SK-N-SH (cell line): ENCODE measurements at regions of chr21 and their contacts with region 1.

Region 1: DNA sequence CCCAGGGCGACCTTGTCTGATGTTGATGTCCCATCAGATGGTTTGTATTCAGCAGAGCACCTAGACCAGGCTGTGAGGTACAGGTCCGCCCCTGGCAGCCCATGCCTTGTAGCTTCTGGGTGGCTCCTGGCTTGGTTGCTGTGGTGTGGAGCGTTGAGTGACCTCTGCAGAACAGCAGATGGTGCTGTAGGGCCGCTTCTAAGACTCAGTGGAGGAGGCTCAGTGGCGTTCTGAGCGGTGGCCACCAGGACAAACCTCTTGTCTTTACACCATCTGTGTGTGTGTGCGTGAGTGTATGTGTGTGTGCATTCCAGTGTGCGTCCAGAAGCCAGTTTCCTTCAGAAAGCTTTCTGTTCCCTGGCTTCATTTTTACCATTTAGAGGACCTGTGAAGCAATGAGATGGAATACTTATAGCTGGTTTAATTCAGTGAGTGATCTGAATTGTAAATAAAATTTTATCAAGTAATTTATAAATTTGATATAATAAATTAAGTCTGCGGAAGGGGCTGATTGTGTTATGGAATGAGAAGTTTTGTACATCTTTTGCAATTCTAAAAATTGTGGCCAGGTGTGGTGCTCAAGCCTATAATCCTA is 66.1 kb downstream of the ADARB1 start:
- DNase-seq: peak; percentile 90
- H3K4me3 ChIP-seq: no peak overlapping the region; a peak in 1 of 4 replicates
- H3K27ac ChIP-seq: no peak overlapping the region
- H3K4me1 ChIP-seq: peaks cover 6 to 9% of the 10 kb centered on the region in 2 experiments; a peak in 3 of 4 replicates
- H3K27me3 ChIP-seq: no peaks in the 10 kb centered on the region
- CTCF ChIP-seq: peak; percentile 91
- EP300 ChIP-seq: no peak
- RAD21 ChIP-seq: peak; percentile 99

Region 2: DNA sequence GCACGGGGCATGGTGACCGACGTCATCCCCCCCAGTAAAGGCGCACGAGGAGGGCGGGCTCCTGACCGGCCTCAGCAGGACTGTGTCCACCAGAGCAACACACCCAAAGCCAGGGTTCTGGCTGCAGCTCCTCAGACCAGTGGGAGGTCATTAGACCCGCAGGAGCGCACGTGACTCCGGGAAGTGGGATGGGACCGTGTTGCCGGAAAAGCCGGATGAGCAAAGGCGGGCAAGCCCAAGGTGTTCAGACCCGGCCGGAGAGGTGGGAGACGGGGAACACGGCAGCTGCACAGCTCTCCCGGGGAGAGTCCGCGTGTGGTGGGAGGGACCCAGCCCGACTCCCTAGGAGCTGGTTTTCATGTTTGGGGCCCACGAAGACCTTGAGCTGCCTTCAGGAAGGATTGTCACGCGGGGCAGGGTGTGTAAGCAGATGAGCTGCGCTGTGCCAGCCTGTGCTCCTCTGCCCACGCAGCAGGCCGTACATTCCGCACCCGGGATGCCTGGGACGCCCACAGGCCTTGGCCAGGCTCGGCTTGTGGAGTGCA is 1148.9 kb before region 1 on chr21:
- CTCF ChIA-PET with region 1: no interaction called
- POLR2A ChIA-PET with region 1: no interaction called
- DNase-seq: no peak
- H3K4me3 ChIP-seq: no peak overlapping the region
- H3K27ac ChIP-seq: no peak overlapping the region
- H3K4me1 ChIP-seq: no peaks in the 10 kb centered on the region
- H3K27me3 ChIP-seq: no peaks in the 10 kb centered on the region
- CTCF ChIP-seq: no peak
- EP300 ChIP-seq: no peak
- RAD21 ChIP-seq: no peak

Region 3: GRCh38 chr21:44723177-44724131 is 417.0 kb before region 1 on chr21:
- CTCF ChIA-PET with region 1: no interaction called
- POLR2A ChIA-PET with region 1: no interaction called
- DNase-seq: no peak
- H3K4me3 ChIP-seq: no peak overlapping the region
- H3K27ac ChIP-seq: no peak overlapping the region
- H3K4me1 ChIP-seq: no peaks in the 10 kb centered on the region
- H3K27me3 ChIP-seq: peaks cover 59% of the 10 kb centered on the region; the same call in 1 of the 2 replicates
- CTCF ChIP-seq: no peak
- EP300 ChIP-seq: no peak
- RAD21 ChIP-seq: no peak

Region 4: GRCh38 chr21:44773287-44773966 is 367.0 kb before region 1 on chr21:
- CTCF ChIA-PET with region 1: no interaction called
- POLR2A ChIA-PET with region 1: no interaction called
- DNase-seq: peak; percentile 49
- H3K4me3 ChIP-seq: no peak overlapping the region
- H3K27ac ChIP-seq: no peak overlapping the region; a peak in 1 of 4 replicates
- H3K4me1 ChIP-seq: peaks cover 0 to 4% of the 10 kb centered on the region in 2 experiments; a peak in 1 of 4 replicates
- H3K27me3 ChIP-seq: no peaks in the 10 kb centered on the region
- CTCF ChIP-seq: no peak
- EP300 ChIP-seq: no peak
- RAD21 ChIP-seq: no peak

Region 5: GRCh38 chr21:44949779-44950198 is 190.7 kb before region 1 on chr21:
- CTCF ChIA-PET with region 1: interaction called, 357 read pairs
- POLR2A ChIA-PET with region 1: no interaction called
- DNase-seq: peak; percentile 95
- H3K4me3 ChIP-seq: peak overlapping the region in 1 of 2 experiments; percentile 33; a peak in 1 of 4 replicates
- H3K27ac ChIP-seq: no peak overlapping the region
- H3K4me1 ChIP-seq: peaks cover 0 to 2% of the 10 kb centered on the region in 2 experiments; a peak in 1 of 4 replicates
- H3K27me3 ChIP-seq: no peaks in the 10 kb centered on the region
- CTCF ChIP-seq: peak; percentile 93
- EP300 ChIP-seq: no peak
- RAD21 ChIP-seq: peak; percentile 91

Region 6: DNA sequence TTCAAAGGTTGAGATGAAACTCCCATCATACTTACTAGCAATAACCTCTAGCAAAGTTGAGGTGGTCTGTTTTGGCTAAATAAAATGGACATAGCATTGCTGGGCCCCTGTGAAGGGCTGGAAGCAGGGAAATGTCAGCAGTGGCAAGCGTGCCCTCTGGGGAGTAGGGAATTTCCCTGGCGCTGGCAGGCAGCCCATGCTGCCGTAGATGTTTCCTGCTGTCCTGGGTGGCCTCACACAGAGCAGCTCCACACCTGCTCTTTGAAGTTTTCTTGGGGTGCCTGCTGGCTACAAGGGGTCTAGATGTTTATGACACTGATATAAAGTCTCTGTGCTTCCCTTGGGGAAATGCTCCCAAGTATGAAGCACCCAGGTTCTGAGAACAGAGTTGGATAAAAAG is 35.9 kb before region 1 on chr21:
- CTCF ChIA-PET with region 1: interaction called, 41 read pairs
- POLR2A ChIA-PET with region 1: no interaction called
- DNase-seq: peak; percentile 52
- H3K4me3 ChIP-seq: no peak overlapping the region
- H3K27ac ChIP-seq: no peak overlapping the region
- H3K4me1 ChIP-seq: peaks cover 18 to 31% of the 10 kb centered on the region in 2 experiments; a peak in 2 of 4 replicates
- H3K27me3 ChIP-seq: no peaks in the 10 kb centered on the region
- CTCF ChIP-seq: no peak
- EP300 ChIP-seq: no peak
- RAD21 ChIP-seq: no peak

Region 7: DNA sequence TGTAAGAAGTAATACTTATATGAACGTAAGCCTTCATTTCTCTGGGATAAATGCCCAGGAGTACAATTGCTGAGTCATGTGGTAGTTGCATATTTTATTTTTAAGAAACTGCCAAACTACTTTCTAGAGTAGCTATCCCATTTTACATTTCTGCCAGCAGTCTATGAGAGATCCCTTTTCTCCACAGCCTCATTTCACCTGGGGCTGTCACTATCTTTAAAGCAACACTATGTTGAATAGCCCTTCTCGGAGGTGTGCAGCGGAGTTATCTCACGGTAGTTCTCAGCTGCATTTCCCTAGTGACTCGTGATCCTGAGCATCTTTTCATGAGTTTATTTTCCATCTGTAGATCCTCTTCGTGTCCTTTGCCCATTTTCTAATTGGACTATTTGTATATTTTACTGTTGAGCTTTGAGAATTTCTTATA is 27.4 kb after region 1 on chr21:
- CTCF ChIA-PET with region 1: interaction called, 28 read pairs
- POLR2A ChIA-PET with region 1: no interaction called
- DNase-seq: no peak
- H3K4me3 ChIP-seq: no peak overlapping the region
- H3K27ac ChIP-seq: peak overlapping the region in 1 of 2 experiments; percentile 38; a peak in 3 of 4 replicates
- H3K4me1 ChIP-seq: peaks cover 4 to 14% of the 10 kb centered on the region in 2 experiments; a peak in 2 of 4 replicates
- H3K27me3 ChIP-seq: no peaks in the 10 kb centered on the region
- CTCF ChIP-seq: no peak
- EP300 ChIP-seq: no peak
- RAD21 ChIP-seq: no peak

Region 8: DNA sequence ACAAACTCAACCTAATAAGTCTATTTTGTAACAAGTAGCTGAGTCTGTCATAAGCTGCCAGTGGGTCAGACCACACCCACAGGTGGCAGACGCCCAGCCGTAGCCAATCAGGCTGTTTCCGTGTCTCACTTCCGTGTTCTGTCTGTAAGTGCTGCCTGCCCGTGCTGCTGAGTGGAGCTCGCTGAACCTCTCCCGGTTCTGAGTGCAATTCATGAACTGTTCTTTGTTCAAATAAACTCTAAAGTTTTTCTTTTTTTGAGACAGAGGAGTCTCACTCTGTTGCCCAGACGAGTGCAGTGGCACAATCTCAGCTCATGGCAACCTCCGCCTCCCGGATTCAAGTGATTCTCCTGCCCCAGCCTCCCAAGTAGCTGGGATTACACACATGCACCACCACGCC is 122.2 kb after region 1 on chr21:
- CTCF ChIA-PET with region 1: interaction called, 19 read pairs
- POLR2A ChIA-PET with region 1: no interaction called
- DNase-seq: peak; percentile 10
- H3K4me3 ChIP-seq: no peak overlapping the region
- H3K27ac ChIP-seq: no peak overlapping the region
- H3K4me1 ChIP-seq: peaks cover 0 to 18% of the 10 kb centered on the region in 2 experiments; a peak in 1 of 4 replicates
- H3K27me3 ChIP-seq: no peaks in the 10 kb centered on the region
- CTCF ChIP-seq: no peak
- EP300 ChIP-seq: no peak
- RAD21 ChIP-seq: no peak

Region 9: DNA sequence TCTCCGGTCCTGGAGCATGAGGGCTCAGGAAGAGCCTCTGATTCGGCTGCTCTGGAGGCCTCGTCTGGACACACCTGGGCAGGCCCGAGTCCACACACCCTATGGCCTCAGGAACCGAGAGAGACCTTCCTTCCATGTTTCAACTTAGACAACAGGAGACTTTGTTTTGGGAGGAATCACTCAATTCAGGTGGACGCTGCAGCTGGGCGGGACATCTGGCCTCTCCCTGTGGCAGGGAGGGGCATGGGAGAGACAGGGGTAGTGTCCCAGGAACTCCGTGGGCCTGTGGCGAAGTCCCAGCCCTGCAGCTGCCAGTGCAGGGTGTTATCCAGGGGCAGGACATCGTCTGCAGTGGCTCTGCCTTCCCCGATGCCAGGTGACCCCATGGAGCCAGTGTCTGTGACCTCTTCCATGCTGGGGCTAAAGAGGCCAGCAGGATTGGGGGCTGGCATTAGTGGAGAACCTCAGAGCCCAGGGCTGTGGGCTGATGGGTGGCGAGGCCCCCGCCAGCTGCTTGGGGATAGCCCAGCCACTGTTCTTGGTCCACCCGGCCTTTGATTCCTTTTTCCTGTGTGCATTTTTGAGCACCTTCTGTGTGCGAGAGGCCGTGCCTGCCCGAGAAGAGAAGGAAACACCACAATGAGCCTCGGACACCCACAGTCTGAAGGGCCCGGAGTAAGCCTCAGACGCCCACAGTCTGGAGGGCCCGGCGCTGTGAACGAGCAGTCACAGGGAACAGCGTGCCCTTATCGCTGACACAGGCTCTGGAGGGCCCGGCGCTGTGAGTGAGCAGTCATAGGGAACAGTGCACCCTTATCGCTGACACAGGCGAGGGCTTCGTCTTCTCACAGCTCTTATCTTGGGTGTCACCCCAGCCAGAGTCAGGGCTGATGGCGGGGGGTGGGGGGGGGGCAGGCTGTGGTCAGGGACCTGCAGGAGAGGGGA is 270.7 kb after region 1 on chr21:
- CTCF ChIA-PET with region 1: interaction called, 13 read pairs
- POLR2A ChIA-PET with region 1: no interaction called
- DNase-seq: no peak
- H3K4me3 ChIP-seq: no peak overlapping the region
- H3K27ac ChIP-seq: no peak overlapping the region
- H3K4me1 ChIP-seq: peaks cover 6 to 44% of the 10 kb centered on the region in 2 experiments; a peak in 1 of 4 replicates
- H3K27me3 ChIP-seq: no peaks in the 10 kb centered on the region
- CTCF ChIP-seq: no peak
- EP300 ChIP-seq: no peak
- RAD21 ChIP-seq: no peak